PC-3 (cell line): ENCODE measurements at regions of chr14 and their contacts with region 1.

Region 1: DNA sequence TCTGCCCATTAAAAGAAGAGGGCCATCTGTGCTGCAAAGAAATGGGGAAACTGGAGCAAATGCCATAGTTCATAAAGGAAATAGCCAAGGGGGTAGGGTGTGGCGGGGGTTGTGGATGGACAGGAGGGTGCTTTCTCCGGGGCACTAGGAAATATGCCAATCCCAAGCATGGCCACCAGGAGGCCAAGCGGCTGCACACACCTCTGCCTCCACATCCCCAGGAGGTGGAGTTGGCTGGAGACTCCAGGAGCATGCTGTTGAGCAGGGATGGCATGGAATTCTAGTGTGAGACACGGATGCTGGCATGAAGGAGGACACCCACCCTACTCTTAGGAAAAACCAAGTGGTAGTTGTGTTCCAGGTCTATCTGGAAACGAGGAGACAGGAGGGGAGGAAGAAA is 25.2 kb downstream of the NID2 start:
- DNase-seq: peak; percentile 63
- ATAC-seq: peak; percentile 30; the same call in 1 of the 2 replicates
- H3K4me3 ChIP-seq: no peak overlapping the region
- H3K27ac ChIP-seq: no peak overlapping the region
- H3K4me1 ChIP-seq: peaks cover 24% of the 10 kb centered on the region
- H3K27me3 ChIP-seq: no peaks in the 10 kb centered on the region
- CTCF ChIP-seq: peak; percentile 76

Region 2: GRCh38 chr14:52071675-52072074 is 28.0 kb after region 1 on chr14:
- CTCF ChIA-PET with region 1: interaction called, 4 read pairs
- POLR2A ChIA-PET with region 1: interaction called, 3 read pairs
- intact Hi-C with region 1: loop called (anchors 2 kb)
- DNase-seq: peak; percentile 44
- ATAC-seq: no peak
- H3K4me3 ChIP-seq: no peak overlapping the region
- H3K27ac ChIP-seq: no peak overlapping the region
- H3K4me1 ChIP-seq: peaks cover 17% of the 10 kb centered on the region
- H3K27me3 ChIP-seq: no peaks in the 10 kb centered on the region
- CTCF ChIP-seq: peak; percentile 54

Region 3: GRCh38 chr14:52111563-52111962 is 67.9 kb after region 1 on chr14:
- CTCF ChIA-PET with region 1: no interaction called
- POLR2A ChIA-PET with region 1: interaction called, 6 read pairs
- intact Hi-C with region 1: loop called (anchors 5 kb)
- DNase-seq: peak; percentile 62
- ATAC-seq: peak; percentile 12
- H3K4me3 ChIP-seq: no peak overlapping the region
- H3K27ac ChIP-seq: peak overlapping the region; percentile 93
- H3K4me1 ChIP-seq: peaks cover 25% of the 10 kb centered on the region
- H3K27me3 ChIP-seq: no peaks in the 10 kb centered on the region
- CTCF ChIP-seq: no peak